Uterus (tissue), 4 donors: ENCODE measurements at regions of chr6 and their contacts with region 1.

Region 1: GRCh38 chr6:160455541-160456213 is 107.5 kb downstream of the SLC22A3 start:
- DNase-seq: peak; percentile 70 to 79
- H3K4me3 ChIP-seq: peak overlapping the region in 1 of 2 donors; percentile 24
- H3K27ac ChIP-seq: peak overlapping the region; percentile 76 to 79
- H3K4me1 ChIP-seq: no peaks in the 10 kb centered on the region
- H3K27me3 ChIP-seq: no peaks in the 10 kb centered on the region
- CTCF ChIP-seq: peak; percentile 82 to 98 (median 94)
- POLR2A ChIP-seq: no peak

Region 2: DNA sequence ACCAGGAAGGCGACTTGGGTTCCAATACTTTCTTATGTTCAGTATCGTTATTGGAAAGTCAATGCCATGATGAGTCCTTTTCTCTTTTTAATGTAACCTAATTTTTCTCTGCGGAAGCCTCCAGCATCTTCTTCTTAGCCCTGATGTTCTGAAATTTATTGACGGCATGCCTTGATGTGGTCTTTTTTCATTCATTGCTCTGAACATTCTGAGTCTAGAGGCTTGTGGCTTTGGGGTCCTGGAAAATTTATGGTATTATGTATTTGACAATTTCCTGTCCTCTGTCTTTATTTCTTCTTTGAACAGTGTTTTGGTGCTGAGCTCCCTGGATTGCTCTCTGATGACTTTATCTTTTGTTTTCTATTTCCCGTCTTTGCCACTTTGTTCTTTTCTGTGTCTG is 593.6 kb before region 1 on chr6:
- intact Hi-C with region 1: loop called (anchors 5 kb)
- DNase-seq: no peak
- H3K4me3 ChIP-seq: no peak overlapping the region
- H3K27ac ChIP-seq: no peak overlapping the region
- H3K4me1 ChIP-seq: no peaks in the 10 kb centered on the region
- H3K27me3 ChIP-seq: no peaks in the 10 kb centered on the region
- CTCF ChIP-seq: no peak
- POLR2A ChIP-seq: no peak

Region 3: GRCh38 chr6:160088069-160088783 is 367.5 kb before region 1 on chr6:
- intact Hi-C with region 1: loop called (anchors 5 kb)
- DNase-seq: peak; percentile 80 to 81
- H3K4me3 ChIP-seq: no peak overlapping the region
- H3K27ac ChIP-seq: peak overlapping the region; percentile 64 to 72
- H3K4me1 ChIP-seq: no peaks in the 10 kb centered on the region
- H3K27me3 ChIP-seq: no peaks in the 10 kb centered on the region
- CTCF ChIP-seq: peak; percentile 55 to 82 (median 74)
- POLR2A ChIP-seq: no peak

Region 4: DNA sequence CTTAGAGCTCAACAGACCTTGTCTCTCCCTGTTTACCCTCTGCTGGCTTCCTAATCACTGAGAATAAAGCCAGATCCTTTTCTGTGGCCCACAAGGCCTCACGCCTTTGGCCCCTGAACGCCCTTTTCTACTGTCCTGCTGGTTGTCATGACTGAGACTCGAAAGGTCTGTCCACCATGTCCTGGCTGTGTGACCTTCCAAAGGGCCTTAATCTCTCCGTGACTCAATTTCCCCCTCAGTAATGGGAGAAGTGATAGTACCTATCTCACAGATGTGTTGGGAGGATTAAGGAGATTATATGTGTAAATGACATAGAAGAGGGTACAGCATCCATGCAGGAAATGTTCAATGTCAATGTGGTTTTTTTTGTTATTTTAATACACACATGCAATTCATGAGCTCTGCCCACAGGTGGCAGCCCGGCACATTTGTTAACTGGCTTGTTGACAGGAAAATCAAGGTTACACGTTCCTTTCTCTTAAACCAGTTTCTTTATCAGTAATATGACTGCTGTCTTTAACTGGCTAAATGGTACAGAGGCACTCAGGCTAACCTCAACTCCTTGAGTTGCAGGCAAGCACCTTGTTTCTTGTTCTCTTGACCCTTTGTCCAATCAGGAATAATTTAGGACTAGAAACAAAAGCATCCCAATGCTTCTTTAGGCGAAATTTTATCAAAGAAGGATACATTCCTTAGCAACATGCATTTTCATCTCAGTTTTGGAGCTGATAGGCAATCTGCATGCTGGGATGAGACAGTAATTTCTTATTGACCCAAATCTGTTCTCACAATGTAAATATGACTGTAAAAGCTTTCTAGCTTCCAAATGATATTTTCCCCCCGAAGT is 317.5 kb before region 1 on chr6:
- intact Hi-C with region 1: loop called (anchors 5 kb)
- DNase-seq: peak; percentile 42 to 53
- H3K4me3 ChIP-seq: no peak overlapping the region
- H3K27ac ChIP-seq: peak overlapping the region; percentile 55 to 80
- H3K4me1 ChIP-seq: peaks cover 3 to 6% of the 10 kb centered on the region in 2 donors
- H3K27me3 ChIP-seq: no peaks in the 10 kb centered on the region
- CTCF ChIP-seq: peak; percentile 69 to 75 (median 72)
- POLR2A ChIP-seq: no peak